ENCODE measurements at regions of chr17 and their contacts with region 1.

Region 1: DNA sequence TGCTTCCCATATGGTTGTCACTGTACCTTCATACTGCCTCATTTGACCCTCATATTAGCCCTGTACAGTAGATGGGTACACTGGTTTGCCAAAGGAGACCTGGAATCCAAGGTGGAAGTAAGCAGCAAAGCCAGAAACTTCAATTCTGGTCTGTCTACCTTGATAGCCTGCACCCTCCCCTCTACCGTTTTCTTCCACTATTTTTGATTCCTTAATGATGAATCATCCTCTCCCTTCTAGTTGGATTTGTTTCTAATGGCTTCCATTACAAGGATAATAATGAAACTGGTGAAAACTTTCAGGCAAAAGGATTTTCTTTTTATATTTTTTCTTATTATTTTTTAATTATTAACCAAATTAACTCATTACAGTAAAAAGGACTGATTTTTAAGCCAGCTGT is 17.3 kb downstream of the TAC4 start:
- DNase-seq: no peak
- ATAC-seq: no peak
- H3K4me3 Mint-ChIP-seq: no peak overlapping the region
- H3K27ac Mint-ChIP-seq: peak overlapping the region in 2 of 10 donors; percentile 40 to 71
- H3K4me1 Mint-ChIP-seq: peaks cover 0 to 14% (median 11%) of the 10 kb centered on the region in 4 donors
- H3K27me3 Mint-ChIP-seq: no peaks in the 10 kb centered on the region

Region 2: DNA sequence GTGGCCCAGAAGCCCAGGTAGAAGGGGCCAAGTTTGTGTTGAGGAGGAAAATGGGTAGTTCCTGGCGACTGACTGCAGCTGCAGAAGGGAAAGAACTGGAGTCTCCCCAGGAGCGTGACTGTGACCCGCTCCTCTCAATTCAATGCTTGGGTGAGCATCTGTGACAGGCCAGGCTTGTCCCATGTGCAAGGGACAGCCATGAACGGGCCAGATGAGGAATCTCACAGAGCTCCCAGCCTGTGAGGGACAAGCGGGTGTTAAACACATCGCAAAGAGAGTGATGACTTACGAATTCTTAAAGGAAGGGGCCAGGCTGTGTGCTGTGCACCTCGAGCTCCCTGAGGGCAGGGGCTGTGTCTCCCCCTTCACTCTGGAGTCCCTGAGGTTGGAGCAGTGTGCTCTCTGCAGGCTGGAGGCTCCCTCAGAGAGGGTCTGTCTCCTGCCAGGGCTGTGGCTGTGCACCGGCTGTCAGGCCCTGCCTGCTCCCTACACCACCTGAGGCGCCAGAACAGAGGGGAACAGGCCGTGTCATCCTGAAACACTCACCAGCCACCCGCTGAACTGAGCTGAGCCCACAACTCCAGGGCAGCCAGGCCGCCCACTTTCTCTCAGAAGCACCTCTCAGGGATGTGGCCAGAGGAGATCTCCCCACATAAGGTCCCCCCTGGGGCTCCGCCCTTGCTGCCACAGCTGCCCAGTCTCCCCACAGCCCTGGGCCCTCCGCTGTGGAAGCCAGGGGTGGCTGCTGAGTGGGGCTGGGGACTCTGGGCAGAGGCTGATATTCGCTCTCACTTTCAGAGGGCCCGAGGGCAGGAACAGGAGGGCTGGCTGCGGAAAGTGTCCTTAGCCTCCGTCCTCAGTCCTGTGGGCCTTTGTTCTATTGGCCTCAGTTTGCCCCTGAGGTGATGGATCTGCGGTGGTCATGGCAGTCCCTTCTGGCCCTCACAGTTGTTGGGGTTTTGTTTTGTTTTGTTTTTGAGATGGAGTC is 280.6 kb before region 1 on chr17:
- POLR2A ChIA-PET with region 1: interaction called, 10 read pairs
- DNase-seq: no peak
- ATAC-seq: no peak
- H3K4me3 Mint-ChIP-seq: no peak overlapping the region
- H3K27ac Mint-ChIP-seq: peak overlapping the region in 1 of 10 donors; percentile 7
- H3K4me1 Mint-ChIP-seq: no peaks in the 10 kb centered on the region
- H3K27me3 Mint-ChIP-seq: peaks cover 0 to 8% (median 2%) of the 10 kb centered on the region in 5 donors

Measured in naive thymus-derived CD8-positive, alpha-beta T cell (primary cell).